Gastrocnemius medialis (tissue), 4 donors: ENCODE measurements at regions of chr14 and their contacts with region 1.

Region 1: DNA sequence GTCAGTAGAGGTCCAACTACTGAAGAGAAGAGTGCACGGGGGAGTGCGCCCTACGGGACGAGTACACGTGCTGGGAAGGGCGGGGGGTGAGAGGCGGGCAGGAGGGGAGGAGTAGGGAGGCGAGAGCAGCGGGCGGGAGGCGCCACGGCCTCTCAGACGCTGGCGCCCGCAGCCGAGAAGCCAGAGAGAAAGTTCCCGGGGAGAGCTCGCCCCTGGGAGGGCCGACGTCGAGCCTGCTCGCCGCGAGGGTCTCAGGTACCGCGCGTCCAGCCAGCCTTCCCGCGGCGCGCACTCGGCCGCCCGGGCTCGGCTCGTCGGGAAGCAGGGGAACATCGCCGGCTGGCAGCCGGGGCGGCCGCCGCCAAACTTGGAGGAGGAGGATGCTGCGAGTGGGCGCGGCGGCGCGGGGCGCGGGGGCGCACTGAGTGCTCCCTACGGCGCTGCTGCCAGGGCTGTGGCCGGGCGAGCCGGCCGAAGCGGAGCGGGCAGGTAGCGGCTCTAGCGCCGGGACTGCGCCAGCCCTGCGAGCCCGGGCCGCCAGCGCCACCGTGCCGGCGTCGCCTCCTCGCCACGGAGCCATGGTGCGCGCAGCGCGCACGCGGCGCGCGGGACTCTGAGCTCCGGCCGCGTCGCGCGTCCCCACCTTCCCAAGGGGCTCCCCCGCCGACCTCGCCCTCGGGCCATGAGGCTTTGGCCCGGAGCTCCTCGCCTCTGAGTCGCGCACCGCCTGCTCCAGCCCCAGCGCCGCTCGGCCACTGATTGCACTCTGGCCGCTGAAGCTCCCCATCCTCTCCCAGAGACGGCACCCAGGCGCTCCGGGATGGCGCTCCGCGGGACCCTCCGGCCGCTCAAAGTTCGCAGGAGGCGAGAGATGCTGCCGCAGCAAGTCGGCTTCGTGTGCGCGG is at the start of gene SLC24A4:
- DNase-seq: no peak
- ATAC-seq: peak; percentile 76 to 78
- H3K4me3 ChIP-seq: peak within 1 kb of the TSS; percentile 37 to 50 (median 44)
- H3K27ac ChIP-seq: no peak within 1 kb of the TSS
- H3K4me1 ChIP-seq: no peaks in the 10 kb centered on the region
- H3K27me3 ChIP-seq: peaks cover 16 to 29% (median 20%) of the 10 kb centered on the region in 3 donors
- CTCF ChIP-seq: no peak
- POLR2A ChIP-seq: no peak
- total RNA-seq, gene SLC24A4: 0.07 to 0.76 (median 0.50) TPM

Region 2: GRCh38 chr14:92144708-92145107 is 178.6 kb before region 1 on chr14:
- in situ Hi-C with region 1: no loop called
- intact Hi-C with region 1: loop called (anchors 10 kb)
- DNase-seq: no peak
- ATAC-seq: no peak
- H3K4me3 ChIP-seq: no peak overlapping the region
- H3K27ac ChIP-seq: no peak overlapping the region
- H3K4me1 ChIP-seq: no peaks in the 10 kb centered on the region
- H3K27me3 ChIP-seq: no peaks in the 10 kb centered on the region
- CTCF ChIP-seq: no peak
- POLR2A ChIP-seq: no peak

Region 3: DNA sequence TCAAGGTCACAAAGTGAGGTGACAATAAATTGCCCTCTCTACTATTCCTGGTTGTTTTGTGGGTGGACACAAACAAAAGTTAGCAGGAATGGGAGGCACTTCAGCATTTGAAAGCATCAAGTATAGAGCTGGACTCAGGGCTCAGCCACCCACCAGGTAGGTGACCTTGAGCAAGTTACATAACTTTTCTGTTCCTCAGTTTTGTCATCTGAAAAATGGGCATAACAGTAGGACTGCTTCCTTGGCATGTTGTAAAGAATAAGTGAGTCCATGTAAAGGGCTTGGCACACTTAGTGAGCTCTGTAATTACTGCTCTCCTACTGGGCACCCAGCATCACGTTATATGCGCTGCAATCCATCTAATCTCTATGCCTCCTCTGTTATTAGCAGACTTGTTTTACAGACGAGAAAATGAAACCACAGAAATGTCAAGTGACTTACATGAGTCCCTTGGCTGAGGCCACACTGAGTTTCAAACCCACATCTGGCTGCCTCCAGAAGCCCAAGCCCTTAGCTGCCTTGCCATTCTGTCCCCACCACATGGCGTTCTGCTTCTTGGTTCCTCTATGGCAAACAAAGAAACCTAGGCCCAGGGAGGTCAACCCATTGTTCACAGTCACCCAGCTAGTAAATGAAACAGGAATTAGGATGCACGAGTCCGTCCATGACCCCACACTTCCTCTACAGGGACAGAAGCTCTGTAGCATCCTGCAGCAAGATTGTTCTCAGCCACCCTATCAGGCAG is 63.5 kb before region 1 on chr14:
- in situ Hi-C with region 1: no loop called
- intact Hi-C with region 1: no loop called
- DNase-seq: no peak
- ATAC-seq: no peak
- H3K4me3 ChIP-seq: no peak overlapping the region
- H3K27ac ChIP-seq: no peak overlapping the region
- H3K4me1 ChIP-seq: no peaks in the 10 kb centered on the region
- H3K27me3 ChIP-seq: peaks cover 0 to 15% (median 2%) of the 10 kb centered on the region in 3 donors
- CTCF ChIP-seq: no peak
- POLR2A ChIP-seq: no peak